ENCODE measurements at regions of chr1 and their contacts with region 1.

Region 1: GRCh38 chr1:164786980-164787833 is 228.2 kb downstream of the PBX1 start:
- DNase-seq: peak; percentile 73
- H3K4me3 Mint-ChIP-seq: no peak overlapping the region
- H3K27ac Mint-ChIP-seq: no peak overlapping the region
- H3K4me1 Mint-ChIP-seq: no peaks in the 10 kb centered on the region
- H3K27me3 Mint-ChIP-seq: peaks cover 4% of the 10 kb centered on the region

Region 2: GRCh38 chr1:162847839-162848453 is 1939.3 kb before region 1 on chr1:
- CTCF ChIA-PET with region 1: no interaction called
- intact Hi-C with region 1: loop called (anchors 10 kb)
- DNase-seq: peak; percentile 89
- H3K4me3 Mint-ChIP-seq: no peak overlapping the region
- H3K27ac Mint-ChIP-seq: no peak overlapping the region
- H3K4me1 Mint-ChIP-seq: no peaks in the 10 kb centered on the region
- H3K27me3 Mint-ChIP-seq: no peaks in the 10 kb centered on the region

Region 3: GRCh38 chr1:163361123-163361934 is 1425.9 kb before region 1 on chr1:
- CTCF ChIA-PET with region 1: interaction called, 5 read pairs
- intact Hi-C with region 1: loop called (anchors 1 kb)
- DNase-seq: peak; percentile 25
- H3K4me3 Mint-ChIP-seq: no peak overlapping the region
- H3K27ac Mint-ChIP-seq: no peak overlapping the region
- H3K4me1 Mint-ChIP-seq: peaks cover 2% of the 10 kb centered on the region
- H3K27me3 Mint-ChIP-seq: peaks cover 5% of the 10 kb centered on the region

Region 4: GRCh38 chr1:163410073-163410999 is 1376.9 kb before region 1 on chr1:
- CTCF ChIA-PET with region 1: interaction called, 4 read pairs
- intact Hi-C with region 1: loop called (anchors 2 kb)
- DNase-seq: peak; percentile 63
- H3K4me3 Mint-ChIP-seq: no peak overlapping the region
- H3K27ac Mint-ChIP-seq: no peak overlapping the region
- H3K4me1 Mint-ChIP-seq: peaks cover 2% of the 10 kb centered on the region
- H3K27me3 Mint-ChIP-seq: peaks cover 12% of the 10 kb centered on the region

Region 5: DNA sequence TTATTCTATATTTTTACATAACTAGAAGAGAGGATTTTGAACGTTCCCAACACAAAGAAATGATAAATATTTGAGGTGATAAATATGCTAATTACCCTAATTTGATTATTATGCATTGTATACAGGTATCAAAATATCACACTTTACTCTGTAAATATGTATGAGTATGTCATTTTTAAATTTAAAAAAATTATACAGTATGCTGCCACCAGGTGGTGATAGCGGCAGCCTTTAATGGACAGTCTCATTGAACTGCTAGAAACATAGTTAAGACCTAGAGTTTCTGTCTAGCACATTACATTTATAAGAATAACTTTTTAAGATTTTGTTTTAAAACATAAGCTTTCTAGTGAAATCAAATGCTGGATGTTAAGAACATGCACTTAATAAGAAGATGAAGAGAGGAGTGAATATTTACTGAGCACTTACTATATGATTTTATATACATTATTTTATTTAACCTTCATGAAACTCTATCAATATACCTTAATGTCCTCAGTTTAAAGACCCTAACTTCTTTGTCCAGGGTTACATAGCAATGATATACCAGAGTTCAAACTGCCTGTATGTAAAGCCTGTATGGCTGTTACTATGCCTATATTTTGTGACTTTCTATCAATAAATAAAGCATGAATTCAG is 1258.4 kb before region 1 on chr1:
- CTCF ChIA-PET with region 1: no interaction called
- intact Hi-C with region 1: loop called (anchors 1 kb)
- DNase-seq: peak; percentile 34
- H3K4me3 Mint-ChIP-seq: no peak overlapping the region
- H3K27ac Mint-ChIP-seq: no peak overlapping the region
- H3K4me1 Mint-ChIP-seq: no peaks in the 10 kb centered on the region
- H3K27me3 Mint-ChIP-seq: peaks cover 2% of the 10 kb centered on the region

Region 6: GRCh38 chr1:164417016-164417704 is 370.0 kb before region 1 on chr1:
- CTCF ChIA-PET with region 1: interaction called, 11 read pairs
- intact Hi-C with region 1: no loop called
- DNase-seq: no peak
- H3K4me3 Mint-ChIP-seq: no peak overlapping the region
- H3K27ac Mint-ChIP-seq: no peak overlapping the region
- H3K4me1 Mint-ChIP-seq: no peaks in the 10 kb centered on the region
- H3K27me3 Mint-ChIP-seq: no peaks in the 10 kb centered on the region

Region 7: GRCh38 chr1:165073185-165074007 is 286.2 kb after region 1 on chr1:
- CTCF ChIA-PET with region 1: no interaction called
- intact Hi-C with region 1: loop called (anchors 2 kb)
- DNase-seq: no peak
- H3K4me3 Mint-ChIP-seq: no peak overlapping the region
- H3K27ac Mint-ChIP-seq: no peak overlapping the region
- H3K4me1 Mint-ChIP-seq: no peaks in the 10 kb centered on the region
- H3K27me3 Mint-ChIP-seq: no peaks in the 10 kb centered on the region

Measured in activated naive CD4-positive, alpha-beta T cell treated with anti-CD3 and anti-CD28 coated beads for 36 hours (primary cell).